Activated CD4-positive, alpha-beta T cell treated with anti-CD3 and anti-CD28 coated beads for 36 hours (primary cell): ENCODE measurements at regions of chr12 and their contacts with region 1.

Region 1: DNA sequence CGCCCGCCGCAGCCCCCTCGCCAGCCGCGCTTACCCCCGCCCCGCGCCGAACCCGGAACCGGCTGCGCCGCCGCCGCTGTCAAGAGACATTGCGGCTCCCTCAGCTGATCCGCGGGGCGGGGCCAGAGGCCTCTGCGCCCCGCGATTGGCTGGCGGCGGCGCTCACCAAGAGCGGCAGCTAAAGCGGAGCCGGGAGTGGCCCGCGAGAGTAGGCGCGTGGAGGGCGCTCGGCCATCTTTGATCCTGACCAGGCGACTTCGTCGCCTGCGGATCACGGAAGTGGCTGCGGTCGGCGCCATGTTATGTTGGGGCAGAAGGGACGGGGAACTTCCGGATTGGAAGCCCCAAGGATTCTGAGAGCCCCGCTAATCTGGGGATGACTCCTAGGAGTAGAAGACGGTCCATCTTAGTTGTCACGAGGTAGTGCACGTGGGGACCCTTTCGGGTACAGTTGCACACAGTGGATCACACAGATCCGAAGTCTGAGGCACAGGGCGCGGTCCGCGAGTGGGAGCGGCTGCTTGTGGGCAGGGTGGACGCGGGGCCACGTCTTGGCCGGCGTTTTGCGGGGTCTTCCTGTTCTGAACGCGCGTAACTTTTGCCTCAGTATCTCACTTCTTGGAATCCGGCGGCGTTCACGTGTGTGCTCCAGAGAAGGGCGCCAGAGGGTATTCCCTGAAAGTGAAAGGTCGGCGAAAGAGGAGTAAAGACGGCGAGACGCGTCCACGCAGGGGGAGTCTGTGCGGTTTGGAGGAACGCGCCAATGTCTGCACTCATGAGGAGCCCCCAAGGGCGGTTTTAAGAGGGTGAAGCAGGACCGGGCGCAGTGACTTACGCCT is at the start of gene CHFR:
- DNase-seq: peak; percentile 98
- ATAC-seq: peak; percentile 99
- H3K4me3 Mint-ChIP-seq: peak within 1 kb of the TSS; percentile 99
- H3K27ac Mint-ChIP-seq: peak within 1 kb of the TSS; percentile 100
- H3K4me1 Mint-ChIP-seq: peaks cover 21% of the 10 kb centered on the region
- H3K27me3 Mint-ChIP-seq: no peaks in the 10 kb centered on the region
- total RNA-seq, gene CHFR: 36.5 to 36.8 TPM

Region 2: DNA sequence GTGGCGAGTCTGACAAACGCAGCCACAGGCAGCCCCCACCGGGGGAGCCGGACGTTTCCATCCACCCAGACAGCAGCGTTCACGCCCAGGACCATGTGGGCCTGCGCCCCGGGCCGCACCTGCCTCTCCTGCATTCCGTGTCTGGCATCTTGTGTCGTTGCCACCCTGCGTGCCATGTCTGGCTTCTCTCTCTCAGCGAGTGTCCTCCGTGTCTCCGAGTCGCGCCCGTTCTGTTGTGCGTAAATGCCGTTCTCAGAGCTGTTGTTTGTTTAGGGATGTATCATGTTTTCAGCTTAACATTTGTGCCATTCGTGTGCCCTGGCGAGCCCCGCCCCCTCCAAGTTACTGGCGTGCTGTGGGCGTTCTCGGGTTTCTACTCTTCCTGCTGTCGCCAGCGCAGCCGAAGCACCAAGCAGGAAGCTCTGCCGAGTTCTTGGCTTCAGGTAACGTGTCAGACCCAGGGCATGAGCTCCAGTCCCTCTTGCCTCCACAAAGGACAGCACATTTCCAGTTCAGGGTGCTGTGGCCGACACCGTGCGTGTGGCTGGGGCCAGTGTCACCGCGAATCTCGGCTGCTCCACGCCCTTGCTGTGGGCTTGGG is 708.8 kb before region 1 on chr12:
- CTCF ChIA-PET with region 1: no interaction called
- POLR2A ChIA-PET with region 1: no interaction called
- intact Hi-C with region 1: no loop called
- DNase-seq: peak; percentile 69
- ATAC-seq: peak; percentile 79
- H3K4me3 Mint-ChIP-seq: peak overlapping the region; percentile 64
- H3K27ac Mint-ChIP-seq: peak overlapping the region; percentile 66
- H3K4me1 Mint-ChIP-seq: peaks cover 18% of the 10 kb centered on the region
- H3K27me3 Mint-ChIP-seq: peaks cover 1% of the 10 kb centered on the region

Region 3: GRCh38 chr12:132710422-132711168 is 177.1 kb before region 1 on chr12 and contains the start of gene PGAM5:
- CTCF ChIA-PET with region 1: interaction called, 3 read pairs
- POLR2A ChIA-PET with region 1: no interaction called
- intact Hi-C with region 1: loop called in 1 of 2 experiments (anchors 1 kb)
- DNase-seq: peak; percentile 92
- ATAC-seq: peak; percentile 92
- H3K4me3 Mint-ChIP-seq: peak within 1 kb of the TSS; percentile 75
- H3K27ac Mint-ChIP-seq: peak within 1 kb of the TSS; percentile 66
- H3K4me1 Mint-ChIP-seq: peaks cover 24% of the 10 kb centered on the region
- H3K27me3 Mint-ChIP-seq: no peaks in the 10 kb centered on the region
- total RNA-seq, gene PGAM5: 65.6 to 74.0 TPM

Region 4: DNA sequence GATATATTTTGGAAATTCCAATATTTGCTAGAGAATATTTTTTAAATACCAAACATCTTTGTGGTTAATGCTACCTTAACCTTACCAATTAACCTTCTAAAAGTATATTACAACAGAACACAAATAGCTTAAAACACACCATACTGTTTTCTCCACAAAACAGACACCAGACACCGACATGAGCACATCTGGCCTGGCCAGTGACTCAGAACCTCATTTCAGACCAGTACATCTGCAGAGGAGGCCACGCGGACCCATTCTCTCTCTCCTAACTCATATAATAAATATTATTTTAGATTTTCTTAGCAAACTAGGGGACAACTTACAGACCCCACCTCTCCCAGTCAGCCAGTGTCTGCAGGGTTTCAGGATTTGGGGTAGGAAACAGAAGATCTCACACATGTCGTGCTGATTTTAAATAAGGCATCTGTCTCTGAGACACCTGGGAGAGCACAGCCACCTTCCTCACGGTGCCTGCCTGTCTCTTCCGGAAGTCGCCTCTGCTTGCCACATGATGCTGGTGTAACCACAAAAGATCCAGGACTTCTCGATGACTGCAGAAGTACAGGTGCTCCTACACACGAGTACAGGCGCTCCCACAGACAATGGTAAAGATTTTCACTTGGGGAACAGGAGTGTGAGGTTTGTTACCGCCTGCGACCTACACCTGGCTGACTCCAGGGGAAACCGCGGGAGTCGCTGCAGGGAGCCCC is 116.5 kb before region 1 on chr12:
- CTCF ChIA-PET with region 1: no interaction called
- POLR2A ChIA-PET with region 1: no interaction called
- intact Hi-C with region 1: loop called in 1 of 2 experiments (anchors 5 kb)
- DNase-seq: peak; percentile 71
- ATAC-seq: peak; percentile 82
- H3K4me3 Mint-ChIP-seq: peak overlapping the region; percentile 52
- H3K27ac Mint-ChIP-seq: peak overlapping the region; percentile 89
- H3K4me1 Mint-ChIP-seq: peaks cover 61% of the 10 kb centered on the region
- H3K27me3 Mint-ChIP-seq: no peaks in the 10 kb centered on the region

Region 5: GRCh38 chr12:132956011-132956788 is 68.5 kb after region 1 on chr12 and contains the start of gene ZNF605:
- CTCF ChIA-PET with region 1: interaction called, 3 read pairs
- POLR2A ChIA-PET with region 1: no interaction called
- intact Hi-C with region 1: loop called in 1 of 2 experiments (anchors 1 kb)
- DNase-seq: peak; percentile 93
- ATAC-seq: peak; percentile 91
- H3K4me3 Mint-ChIP-seq: peak within 1 kb of the TSS; percentile 93
- H3K27ac Mint-ChIP-seq: peak within 1 kb of the TSS; percentile 88
- H3K4me1 Mint-ChIP-seq: peaks cover 22% of the 10 kb centered on the region
- H3K27me3 Mint-ChIP-seq: no peaks in the 10 kb centered on the region
- total RNA-seq, gene ZNF605: 8.0 to 8.3 TPM

Region 6: DNA sequence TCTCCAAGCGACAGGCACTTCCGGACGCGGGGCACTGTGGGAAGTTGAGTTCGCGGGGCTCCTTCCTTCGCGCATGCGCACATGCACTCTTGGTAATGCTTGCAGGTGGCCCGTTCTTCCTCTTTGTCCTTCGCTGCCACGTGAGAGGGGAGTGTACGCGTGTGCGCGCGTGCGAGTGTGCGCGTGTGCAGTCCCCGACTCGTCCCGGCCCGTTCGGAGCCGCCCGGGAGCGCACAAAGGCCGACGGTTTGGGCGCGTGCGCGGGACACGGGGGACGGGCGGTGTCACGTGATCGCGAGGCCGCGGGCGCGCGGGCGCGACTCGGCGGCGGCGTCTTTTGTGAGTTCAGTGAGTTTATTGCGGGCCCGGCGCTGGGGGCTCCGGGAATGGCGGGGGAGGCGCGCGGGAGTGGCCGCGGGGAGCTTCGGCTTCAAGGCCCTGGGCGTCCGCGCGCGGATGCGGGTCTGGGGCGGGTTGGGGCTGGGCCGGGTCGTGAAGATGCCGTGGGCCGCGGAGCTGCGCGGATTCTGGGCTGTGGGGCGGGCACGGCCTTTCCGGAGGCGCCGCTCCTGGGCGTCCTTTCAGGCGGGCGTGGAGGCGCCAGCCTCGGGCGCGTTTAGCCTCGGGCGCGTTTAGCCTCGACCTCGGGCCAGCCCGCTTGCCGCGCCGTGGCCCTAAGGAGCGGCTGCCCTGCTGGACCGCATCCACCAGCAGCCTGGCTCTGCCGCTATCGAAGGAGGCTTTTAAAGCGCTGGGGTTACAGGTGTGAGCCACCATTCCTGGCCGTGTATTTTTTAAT is 149.7 kb after region 1 on chr12 and contains the start of gene ZNF84:
- CTCF ChIA-PET with region 1: no interaction called
- POLR2A ChIA-PET with region 1: interaction called, 3 read pairs
- intact Hi-C with region 1: loop called in 1 of 2 experiments (anchors 1 kb)
- DNase-seq: peak; percentile 98
- ATAC-seq: peak; percentile 97
- H3K4me3 Mint-ChIP-seq: peak within 1 kb of the TSS; percentile 85
- H3K27ac Mint-ChIP-seq: peak within 1 kb of the TSS; percentile 94
- H3K4me1 Mint-ChIP-seq: peaks cover 10% of the 10 kb centered on the region
- H3K27me3 Mint-ChIP-seq: no peaks in the 10 kb centered on the region
- total RNA-seq, gene ZNF84: 21.5 to 24.1 TPM

Region 7: GRCh38 chr12:133130038-133130807 is 242.5 kb after region 1 on chr12 and contains the starts of genes ZNF10 and ZNF891:
- CTCF ChIA-PET with region 1: no interaction called
- POLR2A ChIA-PET with region 1: no interaction called
- intact Hi-C with region 1: loop called in 1 of 2 experiments (anchors 1 kb)
- DNase-seq: peak; percentile 98
- ATAC-seq: peak; percentile 90
- H3K4me3 Mint-ChIP-seq: peak within 1 kb of the TSS; percentile 86
- H3K27ac Mint-ChIP-seq: peak within 1 kb of the TSS; percentile 98
- H3K4me1 Mint-ChIP-seq: peaks cover 15% of the 10 kb centered on the region
- H3K27me3 Mint-ChIP-seq: no peaks in the 10 kb centered on the region
- total RNA-seq, gene ZNF10: 4.8 to 5.1 TPM
- total RNA-seq, gene ZNF891: 1.9 to 2.1 TPM